ENCODE measurements at regions of chr15 and their contacts with region 1.

Region 1: DNA sequence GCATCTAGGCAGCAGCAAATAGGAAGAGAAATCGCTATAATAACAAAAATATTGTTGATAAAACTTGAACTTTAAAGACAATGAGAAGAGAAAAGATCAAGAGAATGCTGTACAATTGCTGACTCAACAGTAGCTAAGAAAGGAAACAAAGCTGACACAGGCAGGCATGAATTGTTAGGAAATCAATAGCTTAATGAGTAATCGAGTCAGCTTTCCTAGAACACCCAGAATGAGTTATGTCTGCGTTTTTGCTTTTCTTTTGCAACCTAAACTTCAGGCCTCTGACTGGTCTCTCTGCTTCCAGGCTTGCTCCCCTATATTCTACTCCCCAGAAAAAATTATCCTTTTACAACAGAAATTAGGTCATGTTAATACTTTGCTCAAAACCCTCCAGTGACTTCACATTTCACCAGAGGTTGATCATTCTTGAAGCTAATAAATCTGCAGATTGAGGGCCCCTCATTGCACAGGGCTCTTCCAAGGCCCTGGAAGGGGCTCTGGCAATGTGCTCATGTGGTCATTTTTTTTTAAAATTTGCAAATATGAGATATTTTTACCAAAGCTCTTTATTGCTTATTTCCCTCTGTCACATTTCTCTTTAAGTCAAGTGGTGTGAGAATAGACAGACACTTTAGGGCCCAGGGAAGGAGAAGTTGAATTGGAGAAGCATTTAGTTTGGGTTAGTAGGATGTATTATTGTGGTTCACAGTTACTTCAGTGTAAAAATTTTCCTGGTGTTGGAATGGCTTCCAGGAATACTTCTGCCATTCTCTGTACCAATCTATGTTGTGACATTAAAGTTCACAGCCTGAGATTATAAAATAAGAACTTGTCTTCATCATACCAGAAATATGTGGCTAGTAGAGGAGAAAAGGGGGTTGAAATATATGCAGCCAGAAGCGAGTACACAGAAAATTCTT is 116.3 kb downstream of the TMCO5A start:
- DNase-seq: peak; percentile 48 to 80 (median 60)
- H3K4me3 ChIP-seq: no peak overlapping the region
- H3K4me3 Mint-ChIP-seq: no peak overlapping the region
- H3K27ac ChIP-seq: peak overlapping the region; percentile 44 to 70
- H3K27ac Mint-ChIP-seq: peak overlapping the region; percentile 33 to 92 (median 83)
- H3K4me1 ChIP-seq: peaks cover 31 to 35% of the 10 kb centered on the region in 2 donors
- H3K4me1 Mint-ChIP-seq: peaks cover 30% of the 10 kb centered on the region
- H3K27me3 ChIP-seq: peaks cover 0 to 2% of the 10 kb centered on the region in 2 donors
- H3K27me3 Mint-ChIP-seq: peaks cover 1 to 10% (median 3%) of the 10 kb centered on the region in 3 donors
- CTCF ChIP-seq: no peak

Region 2: DNA sequence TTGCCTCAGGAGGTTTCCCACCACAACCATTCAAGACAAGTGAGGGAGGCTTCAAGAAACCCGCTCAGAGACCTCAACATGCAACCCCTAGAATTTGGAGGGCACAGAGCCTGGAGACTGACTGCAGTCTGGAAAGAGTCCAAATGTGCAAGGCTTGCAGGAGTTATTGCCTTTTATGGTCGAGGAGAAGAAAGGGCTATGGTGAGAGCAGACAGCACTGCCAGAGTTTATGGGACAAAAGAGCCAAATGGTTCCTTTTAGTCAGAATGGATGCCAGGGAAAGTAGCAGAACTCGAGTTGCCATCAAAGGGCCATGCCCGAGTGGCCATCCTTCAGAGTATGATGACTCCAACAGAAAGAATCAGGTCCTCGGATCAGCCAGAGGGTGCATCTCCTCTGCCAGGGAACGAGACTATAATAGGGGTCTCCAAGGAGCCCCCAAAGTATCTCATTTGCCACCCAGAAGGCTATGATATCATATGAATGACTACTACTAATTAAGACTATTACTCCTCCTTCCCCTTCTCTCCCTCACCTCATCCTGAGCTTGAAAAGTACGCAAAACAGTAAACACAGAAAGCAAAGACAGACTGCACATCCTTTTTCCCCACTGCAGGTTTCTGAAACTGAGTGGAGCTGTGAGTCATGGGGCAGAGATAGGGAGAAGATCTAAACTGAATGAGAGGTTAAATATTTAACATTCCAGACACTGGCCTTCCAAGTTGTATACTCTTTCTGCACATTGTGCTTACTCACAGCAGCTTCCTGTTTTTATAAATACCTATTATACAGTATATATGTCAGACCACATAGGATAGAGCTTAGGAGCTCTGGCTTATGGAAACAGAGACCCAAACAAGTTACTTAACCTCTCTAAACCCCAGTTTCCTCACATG is 150.2 kb before region 1 on chr15:
- intact Hi-C with region 1: no loop called
- DNase-seq: no peak
- H3K4me3 ChIP-seq: no peak overlapping the region
- H3K4me3 Mint-ChIP-seq: no peak overlapping the region
- H3K27ac ChIP-seq: no peak overlapping the region
- H3K27ac Mint-ChIP-seq: no peak overlapping the region
- H3K4me1 ChIP-seq: no peaks in the 10 kb centered on the region
- H3K4me1 Mint-ChIP-seq: no peaks in the 10 kb centered on the region
- H3K27me3 ChIP-seq: no peaks in the 10 kb centered on the region
- H3K27me3 Mint-ChIP-seq: peaks cover 0 to 4% (median 3%) of the 10 kb centered on the region in 3 donors
- CTCF ChIP-seq: no peak

Region 3: DNA sequence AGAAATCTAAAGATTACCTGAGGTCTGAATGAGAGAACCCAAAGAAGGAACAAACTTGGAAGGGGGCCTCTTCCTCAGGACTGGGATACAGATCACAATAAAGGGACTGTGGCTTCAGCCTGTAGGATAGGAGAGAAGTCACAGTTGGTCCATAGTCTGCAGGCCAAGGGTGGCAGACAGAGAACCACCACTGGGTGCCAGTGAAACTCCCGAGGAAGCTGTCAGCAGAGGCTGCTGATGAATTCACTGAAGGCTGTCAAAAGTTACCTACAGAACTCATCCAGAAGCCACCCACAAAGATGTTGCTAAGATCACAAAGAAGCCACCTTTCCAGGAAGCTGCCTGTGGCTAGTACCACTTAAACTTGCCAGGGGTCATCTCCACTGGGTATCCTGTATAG is 37.9 kb before region 1 on chr15:
- intact Hi-C with region 1: loop called in 1 of 2 experiments (anchors 5 kb)
- DNase-seq: no peak
- H3K4me3 ChIP-seq: no peak overlapping the region
- H3K4me3 Mint-ChIP-seq: no peak overlapping the region
- H3K27ac ChIP-seq: no peak overlapping the region
- H3K27ac Mint-ChIP-seq: no peak overlapping the region
- H3K4me1 ChIP-seq: peaks cover 8% of the 10 kb centered on the region in 2 donors
- H3K4me1 Mint-ChIP-seq: peaks cover 13% of the 10 kb centered on the region
- H3K27me3 ChIP-seq: no peaks in the 10 kb centered on the region
- H3K27me3 Mint-ChIP-seq: peaks cover 2 to 6% (median 3%) of the 10 kb centered on the region in 3 donors
- CTCF ChIP-seq: no peak

Region 4: GRCh38 chr15:38111070-38111469 is 60.3 kb after region 1 on chr15:
- intact Hi-C with region 1: loop called in 1 of 2 experiments (anchors 10 kb)
- DNase-seq: no peak
- H3K4me3 ChIP-seq: no peak overlapping the region
- H3K4me3 Mint-ChIP-seq: no peak overlapping the region
- H3K27ac ChIP-seq: no peak overlapping the region
- H3K27ac Mint-ChIP-seq: no peak overlapping the region
- H3K4me1 ChIP-seq: no peaks in the 10 kb centered on the region
- H3K4me1 Mint-ChIP-seq: no peaks in the 10 kb centered on the region
- H3K27me3 ChIP-seq: peaks cover 4 to 12% of the 10 kb centered on the region in 2 donors
- H3K27me3 Mint-ChIP-seq: peaks cover 0 to 4% (median 3%) of the 10 kb centered on the region in 3 donors
- CTCF ChIP-seq: no peak